PC-9 (cell line): ENCODE measurements at regions of chr7 and their contacts with region 1.

Region 1: GRCh38 chr7:130069978-130070860 is at the start of gene KLHDC10:
- DNase-seq: peak; percentile 98
- H3K4me3 ChIP-seq: peak within 1 kb of the TSS; percentile 90
- H3K27ac ChIP-seq: peak within 1 kb of the TSS; percentile 78
- H3K4me1 ChIP-seq: peaks cover 22% of the 10 kb centered on the region
- H3K27me3 ChIP-seq: no peaks in the 10 kb centered on the region
- CTCF ChIP-seq: no peak
- total RNA-seq, gene KLHDC10: 46.4 and 47.0 TPM in 2 replicates

Region 2: GRCh38 chr7:129224251-129225205 is 845.7 kb before region 1 on chr7 and contains the start of gene AHCYL2:
- CTCF ChIA-PET with region 1: no interaction called
- POLR2A ChIA-PET with region 1: no interaction called
- intact Hi-C with region 1: loop called (anchors 10 kb)
- DNase-seq: peak; percentile 95 to 98
- H3K4me3 ChIP-seq: peak within 1 kb of the TSS; percentile 75
- H3K27ac ChIP-seq: peak within 1 kb of the TSS; percentile 74
- H3K4me1 ChIP-seq: peaks cover 19% of the 10 kb centered on the region
- H3K27me3 ChIP-seq: no peaks in the 10 kb centered on the region
- CTCF ChIP-seq: no peak
- total RNA-seq, gene AHCYL2: 15.7 and 16.2 TPM in 2 replicates

Region 3: DNA sequence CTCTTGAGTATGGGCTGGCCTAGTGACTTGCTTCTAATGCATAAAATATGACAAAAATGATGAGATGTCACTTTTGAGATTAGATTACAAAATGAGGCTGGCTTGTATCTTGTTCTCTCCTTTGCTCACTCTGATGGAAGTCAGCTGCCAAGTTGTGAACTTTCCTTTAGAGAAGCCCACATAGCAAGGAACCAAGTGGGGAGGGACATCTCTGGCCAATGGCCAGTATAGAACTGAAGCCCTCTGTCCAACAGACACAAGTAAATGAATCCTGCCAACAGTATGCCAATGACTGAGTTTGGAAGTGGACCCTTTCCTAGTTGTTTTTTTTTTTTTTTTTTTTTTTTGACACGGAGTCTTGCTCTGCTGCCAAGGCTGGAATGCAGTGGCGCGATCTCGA is 22.4 kb before region 1 on chr7:
- CTCF ChIA-PET with region 1: interaction called, 3 read pairs
- POLR2A ChIA-PET with region 1: interaction called, 12 read pairs
- intact Hi-C with region 1: no loop called
- DNase-seq: no peak
- H3K4me3 ChIP-seq: no peak overlapping the region
- H3K27ac ChIP-seq: no peak overlapping the region
- H3K4me1 ChIP-seq: peaks cover 8% of the 10 kb centered on the region
- H3K27me3 ChIP-seq: no peaks in the 10 kb centered on the region
- CTCF ChIP-seq: no peak

Region 4: DNA sequence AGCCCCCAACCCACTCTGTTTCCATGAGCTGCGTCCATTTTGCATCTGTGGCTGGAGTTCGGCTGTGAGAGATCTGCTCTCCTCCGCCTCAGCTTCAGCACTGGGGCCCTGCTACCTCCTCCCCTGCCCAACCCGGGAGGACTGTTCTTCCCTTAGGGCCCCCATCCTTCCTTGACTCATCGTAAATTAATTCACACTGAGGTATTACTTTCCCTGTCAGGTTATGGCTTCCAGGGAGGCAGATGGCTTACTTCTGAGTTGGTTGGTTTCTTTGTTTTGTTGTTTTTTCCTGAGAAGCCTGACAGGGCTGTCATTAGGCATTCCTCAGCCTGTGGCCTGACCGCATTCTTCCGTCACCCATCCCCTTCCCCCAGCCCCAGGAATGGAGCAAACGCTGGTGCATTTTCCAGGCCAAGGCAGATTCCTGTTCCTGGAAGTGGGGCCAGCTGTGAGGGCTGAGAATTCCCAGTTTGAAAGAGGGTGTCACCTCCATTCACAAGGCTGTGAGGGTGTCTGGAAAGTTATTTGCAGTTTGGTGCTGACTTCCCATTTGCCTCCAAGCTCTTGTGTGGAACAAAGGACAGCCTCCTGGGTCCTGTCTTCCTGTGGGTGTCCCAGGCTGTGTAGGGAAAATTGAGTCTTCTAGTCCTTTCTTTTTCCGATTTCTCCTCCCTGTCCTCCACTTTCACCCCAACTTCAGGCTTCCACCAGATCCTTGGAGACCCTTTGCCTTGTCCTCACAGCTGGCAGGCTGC is 286.1 kb after region 1 on chr7:
- CTCF ChIA-PET with region 1: no interaction called
- POLR2A ChIA-PET with region 1: no interaction called
- intact Hi-C with region 1: loop called (anchors 2 kb)
- DNase-seq: peak; percentile 93 to 99
- H3K4me3 ChIP-seq: peak overlapping the region; percentile 21; the same call in 1 of the 2 replicates
- H3K27ac ChIP-seq: peak overlapping the region; percentile 75
- H3K4me1 ChIP-seq: peaks cover 69% of the 10 kb centered on the region
- H3K27me3 ChIP-seq: no peaks in the 10 kb centered on the region
- CTCF ChIP-seq: no peak

Region 5: DNA sequence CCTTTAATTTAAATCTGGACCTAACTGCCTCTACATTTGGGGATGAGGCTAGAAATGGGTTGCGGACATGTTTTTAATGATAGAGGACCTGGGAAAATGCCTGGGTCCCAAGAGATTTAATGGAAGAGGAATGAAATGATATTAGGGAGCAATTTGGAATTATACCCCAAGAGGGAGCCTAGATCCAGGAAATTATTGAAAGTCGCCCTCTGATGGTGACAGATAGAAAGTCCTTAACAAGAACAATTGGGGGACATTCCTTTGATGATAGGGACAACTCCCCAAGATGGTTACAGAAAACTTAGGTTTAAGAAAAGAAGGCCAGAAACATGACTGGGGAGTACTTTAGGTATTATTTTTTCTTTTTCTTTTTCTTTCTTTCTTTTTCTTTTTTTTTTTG is 625.6 kb after region 1 on chr7:
- CTCF ChIA-PET with region 1: no interaction called
- POLR2A ChIA-PET with region 1: no interaction called
- intact Hi-C with region 1: loop called (anchors 2 kb)
- DNase-seq: peak in 1 of 2 experiments; percentile 6
- H3K4me3 ChIP-seq: no peak overlapping the region
- H3K27ac ChIP-seq: no peak overlapping the region
- H3K4me1 ChIP-seq: no peaks in the 10 kb centered on the region
- H3K27me3 ChIP-seq: no peaks in the 10 kb centered on the region
- CTCF ChIP-seq: peak; percentile 75

Region 6: DNA sequence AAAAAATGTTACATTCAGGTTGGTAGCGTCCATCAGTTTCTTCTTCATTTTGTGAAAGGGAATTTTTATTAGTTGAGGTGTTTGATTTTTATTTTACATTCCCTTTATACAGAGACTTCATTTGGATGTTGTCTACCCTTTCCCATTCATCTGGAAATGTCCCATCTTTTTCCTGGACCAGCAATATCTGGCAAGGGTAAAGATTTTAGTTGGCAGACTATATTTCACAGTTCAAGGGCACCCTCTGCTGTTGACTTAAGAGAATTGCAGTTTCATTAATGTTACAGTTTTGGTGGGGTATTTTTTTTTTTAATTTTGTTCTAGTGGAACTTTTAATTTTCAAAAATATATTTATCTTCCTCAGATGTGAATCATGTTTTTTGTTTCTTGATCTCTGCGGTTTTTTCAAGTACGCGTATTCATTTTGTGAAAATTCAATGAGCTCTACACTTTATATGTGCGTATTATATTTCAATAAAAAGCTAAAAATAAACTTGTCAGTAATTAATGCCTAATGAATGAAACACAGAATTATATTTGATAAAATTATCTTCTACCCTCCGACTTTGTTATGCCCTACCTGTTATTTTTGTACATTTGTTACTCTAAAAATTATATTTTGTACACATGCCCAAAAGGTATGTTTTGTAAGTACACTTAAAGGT is 761.7 kb after region 1 on chr7:
- CTCF ChIA-PET with region 1: interaction called, 3 read pairs
- POLR2A ChIA-PET with region 1: no interaction called
- intact Hi-C with region 1: loop called (anchors 2 kb)
- DNase-seq: peak in 1 of 2 experiments; percentile 58
- H3K4me3 ChIP-seq: no peak overlapping the region
- H3K27ac ChIP-seq: no peak overlapping the region
- H3K4me1 ChIP-seq: no peaks in the 10 kb centered on the region
- H3K27me3 ChIP-seq: no peaks in the 10 kb centered on the region
- CTCF ChIP-seq: peak; percentile 95